Activated B cell treated with CpG ODN at 0.5 μM for 24 hours (primary cell): ENCODE measurements at regions of chr15 and their contacts with region 1.

Region 1: DNA sequence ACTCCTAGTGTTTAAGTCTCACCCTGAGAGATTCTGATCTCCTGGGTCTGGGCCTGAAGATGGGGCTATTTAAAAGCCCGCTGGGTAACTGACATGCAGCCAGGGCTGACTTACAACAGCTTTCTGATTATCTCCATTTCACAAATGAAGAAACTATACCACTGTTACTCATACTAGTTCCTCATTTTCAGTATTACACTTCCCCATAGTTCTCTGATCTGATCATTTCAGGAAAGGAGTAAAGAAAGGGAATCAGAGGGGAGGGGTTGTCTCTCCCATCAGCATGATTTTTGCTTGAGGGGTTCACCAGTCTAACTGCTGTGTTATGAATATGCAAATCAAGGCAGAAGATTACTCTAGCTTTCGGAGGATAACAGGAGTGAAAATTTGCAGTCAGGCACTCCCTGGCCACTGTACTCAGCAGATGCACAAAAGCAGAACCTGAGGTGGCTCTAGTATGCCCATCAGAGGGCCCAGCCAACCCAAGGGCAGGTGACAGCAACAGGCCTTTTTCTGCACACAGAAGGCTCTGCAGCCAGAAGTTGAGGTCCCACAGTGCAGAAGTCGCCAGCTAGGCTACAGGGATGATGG is 59.4 kb downstream of the DAPK2 start:
- DNase-seq: no peak
- ATAC-seq: peak; percentile 82
- H3K4me3 Mint-ChIP-seq: peak overlapping the region; percentile 61
- H3K27ac Mint-ChIP-seq: peak overlapping the region; percentile 86
- H3K4me1 Mint-ChIP-seq: peaks cover 60% of the 10 kb centered on the region
- H3K27me3 Mint-ChIP-seq: no peaks in the 10 kb centered on the region
- CTCF ChIP-seq: no peak

Region 2: GRCh38 chr15:63833021-63833696 is 153.7 kb before region 1 on chr15:
- CTCF ChIA-PET with region 1: no interaction called
- POLR2A ChIA-PET with region 1: no interaction called
- intact Hi-C with region 1: loop called (anchors 5 kb)
- DNase-seq: peak; percentile 44
- ATAC-seq: peak; percentile 43
- H3K4me3 Mint-ChIP-seq: peak overlapping the region; percentile 97
- H3K27ac Mint-ChIP-seq: peak overlapping the region; percentile 74
- H3K4me1 Mint-ChIP-seq: peaks cover 48% of the 10 kb centered on the region
- H3K27me3 Mint-ChIP-seq: no peaks in the 10 kb centered on the region
- CTCF ChIP-seq: no peak

Region 3: DNA sequence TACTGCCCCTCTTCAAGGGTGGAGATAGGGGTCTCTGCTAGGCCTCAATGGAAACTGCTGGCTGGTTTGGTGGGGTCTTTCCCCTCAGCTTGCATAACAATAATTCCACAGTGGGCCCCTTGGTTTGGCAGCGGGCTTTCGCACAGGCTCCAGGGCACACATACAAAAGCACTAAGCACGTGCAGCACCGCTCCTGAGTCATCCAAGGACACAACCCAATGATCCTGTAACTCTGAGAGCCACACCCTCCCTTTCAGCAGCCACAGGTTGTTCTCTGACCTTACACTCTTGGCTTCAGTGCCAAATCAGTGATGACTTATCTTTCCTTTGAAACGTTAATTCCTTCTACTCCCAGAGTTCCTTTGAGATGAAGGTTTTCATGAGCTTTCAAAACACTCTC is 17.7 kb after region 1 on chr15:
- CTCF ChIA-PET with region 1: interaction called, 4 read pairs
- POLR2A ChIA-PET with region 1: interaction called, 25 read pairs
- intact Hi-C with region 1: no loop called
- DNase-seq: no peak
- ATAC-seq: no peak
- H3K4me3 Mint-ChIP-seq: no peak overlapping the region
- H3K27ac Mint-ChIP-seq: no peak overlapping the region
- H3K4me1 Mint-ChIP-seq: peaks cover 11% of the 10 kb centered on the region
- H3K27me3 Mint-ChIP-seq: no peaks in the 10 kb centered on the region
- CTCF ChIP-seq: no peak